B cell (primary cell): ENCODE measurements at regions of chr1 and their contacts with region 1.

Region 1: DNA sequence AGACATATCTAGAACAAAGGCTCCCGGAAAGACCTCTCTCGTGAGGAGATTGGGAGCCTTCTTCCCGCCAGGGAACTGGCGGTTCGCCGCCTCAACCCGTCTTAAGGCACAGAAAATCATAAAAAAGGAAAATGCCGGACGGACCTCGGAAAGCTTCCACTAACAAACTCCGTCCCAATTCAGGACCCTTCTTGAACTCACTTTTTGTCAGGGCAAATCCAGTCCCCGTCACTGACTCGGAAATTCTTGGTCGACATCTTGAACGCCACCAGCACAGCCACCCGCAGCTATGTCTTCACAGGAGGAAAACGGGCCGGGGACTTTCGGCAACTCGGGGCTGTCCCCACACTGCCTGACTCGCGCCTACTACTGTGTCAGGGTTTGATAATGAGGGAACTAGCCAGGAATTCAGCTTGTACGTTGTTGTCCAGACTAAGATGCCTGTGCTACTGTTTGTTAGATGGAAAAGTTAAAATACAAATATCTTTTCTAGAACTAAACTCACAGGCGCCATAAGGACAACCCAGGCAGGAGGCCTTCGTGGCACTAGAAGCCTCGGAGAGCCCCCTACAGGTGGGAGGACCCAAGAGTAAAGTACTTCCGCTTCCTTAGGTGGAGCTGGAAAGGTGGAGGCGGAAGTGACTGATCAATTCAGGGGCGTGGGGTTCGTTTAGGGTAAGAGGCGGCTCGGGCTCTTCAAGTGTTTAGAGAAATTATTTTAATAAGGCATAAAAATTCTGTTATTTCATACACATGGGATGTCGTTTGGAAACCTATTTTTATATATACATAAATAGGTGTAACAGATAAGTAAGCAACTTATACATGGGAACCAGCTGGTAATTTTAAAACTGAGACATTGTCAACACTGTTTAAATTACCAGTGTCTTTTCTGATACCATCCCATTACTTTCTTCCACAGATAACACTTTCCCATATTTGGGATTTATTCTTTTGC is at the start of gene ZRANB2:
- DNase-seq: peak; percentile 97
- ATAC-seq: peak; percentile 96
- H3K4me3 ChIP-seq: peak within 1 kb of the TSS; percentile 84 to 99 (median 91)
- H3K4me3 Mint-ChIP-seq: peak within 1 kb of the TSS; percentile 89
- H3K27ac ChIP-seq: peak within 1 kb of the TSS; percentile 92 to 98
- H3K27ac Mint-ChIP-seq: peak within 1 kb of the TSS; percentile 100
- H3K4me1 ChIP-seq: peaks cover 8 to 14% of the 10 kb centered on the region in 2 donors
- H3K4me1 Mint-ChIP-seq: peaks cover 24% of the 10 kb centered on the region
- H3K27me3 ChIP-seq: peaks cover 0 to 20% (median 6%) of the 10 kb centered on the region in 4 experiments
- H3K27me3 Mint-ChIP-seq: peaks cover 26% of the 10 kb centered on the region
- CTCF ChIP-seq: peak; percentile 64
- total RNA-seq, gene ZRANB2: 160 and 161 TPM in 2 replicates

Region 2: GRCh38 chr1:70205434-70206118 is 875.4 kb before region 1 on chr1 and contains the start of gene LRRC40:
- CTCF ChIA-PET with region 1: interaction called, 11 read pairs
- POLR2A ChIA-PET with region 1: interaction called, 11 read pairs
- intact Hi-C with region 1: loop called (anchors 1 kb)
- DNase-seq: peak; percentile 96
- ATAC-seq: peak; percentile 96
- H3K4me3 ChIP-seq: peak within 1 kb of the TSS; percentile 63 to 93 (median 91)
- H3K4me3 Mint-ChIP-seq: peak within 1 kb of the TSS; percentile 98
- H3K27ac ChIP-seq: peak within 1 kb of the TSS; percentile 86 to 92
- H3K27ac Mint-ChIP-seq: peak within 1 kb of the TSS; percentile 98
- H3K4me1 ChIP-seq: peaks cover 18 to 30% of the 10 kb centered on the region in 2 donors
- H3K4me1 Mint-ChIP-seq: peaks cover 66% of the 10 kb centered on the region
- H3K27me3 ChIP-seq: no peaks in the 10 kb centered on the region
- H3K27me3 Mint-ChIP-seq: no peaks in the 10 kb centered on the region
- CTCF ChIP-seq: no peak
- total RNA-seq, gene LRRC40: 14.5 and 14.6 TPM in 2 replicates

Region 3: DNA sequence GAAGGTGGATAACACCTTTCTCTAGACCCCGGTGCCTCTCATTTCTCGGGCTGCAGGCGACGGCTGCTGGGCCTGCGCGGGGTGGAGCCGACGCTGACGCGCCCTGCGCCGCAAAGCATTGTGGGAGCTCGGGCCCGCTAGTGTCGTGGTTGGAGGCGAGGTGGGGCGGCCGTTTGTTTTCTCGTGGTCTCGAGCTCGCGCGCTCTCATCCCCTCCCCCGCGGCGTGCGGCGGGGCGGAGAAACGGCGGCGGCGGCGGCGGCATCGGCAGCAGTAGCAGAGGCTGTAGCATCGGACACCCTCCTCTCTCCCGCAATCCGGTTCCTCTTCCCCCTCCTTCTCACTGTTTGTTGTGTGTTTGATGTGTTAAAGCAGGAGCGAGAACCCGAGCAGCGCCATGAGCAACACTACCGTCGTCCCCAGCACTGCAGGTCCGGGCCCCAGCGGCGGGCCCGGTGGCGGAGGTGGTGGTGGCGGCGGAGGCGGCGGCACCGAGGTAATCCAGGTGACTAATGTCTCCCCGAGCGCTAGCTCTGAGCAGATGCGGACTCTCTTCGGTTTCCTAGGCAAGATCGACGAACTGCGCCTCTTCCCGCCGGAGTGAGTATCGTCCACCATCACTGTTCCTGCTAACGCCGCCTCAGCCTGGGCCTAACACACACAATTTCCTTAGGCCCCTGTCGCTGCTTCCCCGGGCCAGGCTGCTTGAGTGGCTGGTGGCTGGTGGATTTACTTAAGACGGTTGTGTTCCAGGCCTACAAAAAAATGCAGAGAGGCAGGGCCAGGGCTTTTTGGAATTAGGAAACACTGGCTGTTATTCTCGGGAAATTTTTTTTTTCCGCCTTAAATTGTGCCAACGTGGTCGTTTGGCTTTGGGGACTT is 859.5 kb before region 1 on chr1 and contains the start of gene SRSF11:
- CTCF ChIA-PET with region 1: no interaction called
- POLR2A ChIA-PET with region 1: no interaction called
- intact Hi-C with region 1: loop called (anchors 1 kb)
- DNase-seq: peak; percentile 97
- ATAC-seq: peak; percentile 96
- H3K4me3 ChIP-seq: peak within 1 kb of the TSS; percentile 69 to 81 (median 79)
- H3K4me3 Mint-ChIP-seq: peak within 1 kb of the TSS; percentile 93
- H3K27ac ChIP-seq: peak within 1 kb of the TSS; percentile 94
- H3K27ac Mint-ChIP-seq: peak within 1 kb of the TSS; percentile 97
- H3K4me1 ChIP-seq: peaks cover 11 to 25% of the 10 kb centered on the region in 2 donors
- H3K4me1 Mint-ChIP-seq: peaks cover 47% of the 10 kb centered on the region
- H3K27me3 ChIP-seq: no peaks in the 10 kb centered on the region
- H3K27me3 Mint-ChIP-seq: no peaks in the 10 kb centered on the region
- CTCF ChIP-seq: no peak
- total RNA-seq, gene SRSF11: 322 and 333 TPM in 2 replicates

Region 4: DNA sequence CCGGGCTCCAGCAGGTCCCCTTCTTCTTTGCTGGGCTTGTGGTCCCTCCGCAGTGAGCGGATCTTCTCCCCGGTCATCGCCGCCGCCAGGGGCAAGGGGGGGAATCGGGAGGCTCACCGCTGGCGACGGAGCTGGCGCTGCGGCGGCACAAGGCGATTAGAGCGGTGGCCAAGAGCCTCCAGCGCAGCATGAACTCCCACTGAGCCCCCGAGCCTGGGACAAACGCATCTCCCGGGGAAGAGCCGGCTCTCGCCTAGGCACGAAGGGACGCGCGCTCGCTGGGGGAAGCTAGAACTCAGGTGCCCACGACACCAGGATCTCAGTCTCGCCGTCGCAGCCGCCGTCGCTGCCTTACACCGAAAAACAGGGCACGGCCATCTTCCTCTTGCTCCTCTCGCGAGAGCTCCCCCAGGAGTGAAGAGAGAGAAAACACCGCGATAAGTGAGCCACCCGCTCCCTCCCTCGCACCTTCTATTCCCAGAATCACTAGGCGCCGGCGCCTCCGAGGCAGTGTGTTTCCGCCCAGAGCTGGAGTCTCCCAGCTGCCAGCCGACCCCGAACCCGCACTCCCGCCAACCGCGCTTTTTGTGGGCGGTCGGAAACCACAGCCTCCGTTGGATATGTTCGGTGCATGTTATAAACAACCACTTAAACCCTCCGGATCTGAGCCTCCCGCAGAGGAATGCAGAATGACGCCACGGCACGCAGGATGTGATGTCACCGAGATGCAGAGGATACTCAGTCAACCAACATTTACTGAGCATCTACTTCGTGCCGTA is 726.5 kb before region 1 on chr1 and contains the start of gene ANKRD13C:
- CTCF ChIA-PET with region 1: no interaction called
- POLR2A ChIA-PET with region 1: no interaction called
- intact Hi-C with region 1: loop called (anchors 1 kb)
- DNase-seq: peak; percentile 95
- ATAC-seq: peak; percentile 89
- H3K4me3 ChIP-seq: peak within 1 kb of the TSS; percentile 75 to 99 (median 95)
- H3K4me3 Mint-ChIP-seq: peak within 1 kb of the TSS; percentile 96
- H3K27ac ChIP-seq: peak within 1 kb of the TSS; percentile 91 to 93
- H3K27ac Mint-ChIP-seq: peak within 1 kb of the TSS; percentile 97
- H3K4me1 ChIP-seq: peaks cover 20 to 21% of the 10 kb centered on the region in 2 donors
- H3K4me1 Mint-ChIP-seq: peaks cover 40% of the 10 kb centered on the region
- H3K27me3 ChIP-seq: no peaks in the 10 kb centered on the region
- H3K27me3 Mint-ChIP-seq: no peaks in the 10 kb centered on the region
- CTCF ChIP-seq: no peak
- total RNA-seq, gene ANKRD13C: 29.9 and 31.9 TPM in 2 replicates

Region 5: GRCh38 chr1:70410604-70411359 is 670.2 kb before region 1 on chr1 and contains the start of gene CTH:
- CTCF ChIA-PET with region 1: interaction called, 9 read pairs
- POLR2A ChIA-PET with region 1: no interaction called
- intact Hi-C with region 1: loop called (anchors 1 kb)
- DNase-seq: peak; percentile 95
- ATAC-seq: peak; percentile 96
- H3K4me3 ChIP-seq: peak within 1 kb of the TSS; percentile 72 to 98 (median 84)
- H3K4me3 Mint-ChIP-seq: peak within 1 kb of the TSS; percentile 91
- H3K27ac ChIP-seq: peak within 1 kb of the TSS; percentile 90 to 94
- H3K27ac Mint-ChIP-seq: peak within 1 kb of the TSS; percentile 98
- H3K4me1 ChIP-seq: peaks cover 13 to 24% of the 10 kb centered on the region in 2 donors
- H3K4me1 Mint-ChIP-seq: peaks cover 24% of the 10 kb centered on the region
- H3K27me3 ChIP-seq: no peaks in the 10 kb centered on the region
- H3K27me3 Mint-ChIP-seq: peaks cover 11% of the 10 kb centered on the region
- CTCF ChIP-seq: no peak
- total RNA-seq, gene CTH: 3.9 and 4.9 TPM in 2 replicates

Region 6: GRCh38 chr1:71049951-71050598 is 30.9 kb before region 1 on chr1:
- CTCF ChIA-PET with region 1: interaction called, 5 read pairs
- POLR2A ChIA-PET with region 1: interaction called, 3 read pairs
- intact Hi-C with region 1: loop called (anchors 5 kb)
- DNase-seq: peak; percentile 69
- ATAC-seq: peak; percentile 48
- H3K4me3 ChIP-seq: no peak overlapping the region
- H3K4me3 Mint-ChIP-seq: no peak overlapping the region
- H3K27ac ChIP-seq: no peak overlapping the region
- H3K27ac Mint-ChIP-seq: no peak overlapping the region
- H3K4me1 ChIP-seq: peaks cover 17 to 21% of the 10 kb centered on the region in 2 donors
- H3K4me1 Mint-ChIP-seq: peaks cover 17% of the 10 kb centered on the region
- H3K27me3 ChIP-seq: peaks cover 0 to 35% (median 27%) of the 10 kb centered on the region in 4 experiments
- H3K27me3 Mint-ChIP-seq: peaks cover 42% of the 10 kb centered on the region
- CTCF ChIP-seq: peak; percentile 83

Region 7: DNA sequence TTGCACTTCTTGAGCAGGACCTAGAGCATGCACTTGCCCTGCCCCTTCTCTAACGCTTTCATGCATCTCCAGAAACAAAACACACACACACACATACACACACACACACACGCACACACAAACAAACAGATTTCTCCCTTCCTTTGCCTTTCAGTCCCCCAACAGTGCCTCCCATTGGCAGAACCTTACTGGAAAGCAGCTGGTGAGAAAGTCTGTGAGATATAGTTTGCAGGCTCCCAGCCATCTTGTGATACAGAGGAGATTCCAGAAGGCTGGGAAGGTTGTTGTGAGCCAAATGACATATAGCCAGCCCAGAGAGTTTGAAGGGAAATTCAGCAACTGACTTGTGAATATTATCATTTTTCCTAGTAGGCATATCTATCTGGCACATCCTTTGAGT is 35.7 kb after region 1 on chr1:
- CTCF ChIA-PET with region 1: no interaction called
- POLR2A ChIA-PET with region 1: no interaction called
- intact Hi-C with region 1: no loop called
- DNase-seq: no peak
- ATAC-seq: no peak
- H3K4me3 ChIP-seq: no peak overlapping the region
- H3K4me3 Mint-ChIP-seq: no peak overlapping the region
- H3K27ac ChIP-seq: no peak overlapping the region
- H3K27ac Mint-ChIP-seq: no peak overlapping the region
- H3K4me1 ChIP-seq: no peaks in the 10 kb centered on the region
- H3K4me1 Mint-ChIP-seq: no peaks in the 10 kb centered on the region
- H3K27me3 ChIP-seq: no peaks in the 10 kb centered on the region
- H3K27me3 Mint-ChIP-seq: peaks cover 5% of the 10 kb centered on the region
- CTCF ChIP-seq: no peak